Activated CD4-positive, alpha-beta T cell treated with anti-CD3 and anti-CD28 coated beads for 36 hours (primary cell): ENCODE measurements at regions of chr12 and their contacts with region 1.

Region 1: DNA sequence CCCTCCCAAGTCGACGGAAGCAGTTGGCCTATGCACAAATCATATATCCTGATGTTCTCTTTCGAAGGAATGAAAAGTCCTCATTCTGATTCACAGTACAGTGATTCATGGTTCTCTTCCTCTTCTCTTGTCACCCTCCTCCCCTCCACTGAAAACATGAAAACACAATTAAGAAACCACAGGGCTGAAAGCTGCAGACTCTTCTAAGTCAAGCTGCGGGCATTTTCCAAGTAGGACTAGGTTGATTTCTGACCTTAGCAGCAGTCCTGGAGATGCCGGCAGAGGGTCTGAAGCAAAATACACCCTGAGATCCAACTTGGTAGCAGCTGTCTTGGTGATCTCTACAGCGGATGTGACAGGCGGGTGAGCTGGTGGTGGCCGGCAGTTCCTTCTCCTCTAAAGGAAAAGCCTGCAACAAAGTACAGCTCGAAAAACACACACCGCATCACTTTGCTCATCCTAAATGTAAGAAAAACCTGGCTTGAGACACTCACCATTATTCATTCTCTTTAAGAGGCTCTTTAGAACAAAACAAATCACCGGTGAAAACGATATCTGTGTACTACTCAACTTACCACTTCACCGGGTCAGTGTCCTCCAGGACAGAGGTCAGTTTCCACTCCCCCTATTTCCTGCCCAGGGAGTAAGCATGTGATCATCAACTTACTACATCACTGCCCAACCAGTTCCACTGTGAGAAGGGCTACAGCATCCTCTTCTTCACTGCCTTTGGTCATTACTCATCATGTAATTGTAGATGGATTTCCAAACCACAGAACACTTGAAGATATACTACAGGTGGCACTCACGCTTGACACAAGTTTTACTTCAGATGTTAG is 6.0 kb downstream of the TMCC3 start:
- DNase-seq: peak; percentile 41
- ATAC-seq: peak; percentile 61
- H3K4me3 Mint-ChIP-seq: no peak overlapping the region
- H3K27ac Mint-ChIP-seq: no peak overlapping the region
- H3K4me1 Mint-ChIP-seq: peaks cover 37% of the 10 kb centered on the region
- H3K27me3 Mint-ChIP-seq: peaks cover 48% of the 10 kb centered on the region

Region 2: GRCh38 chr12:94305130-94305957 is 339.0 kb before region 1 on chr12:
- CTCF ChIA-PET with region 1: no interaction called
- POLR2A ChIA-PET with region 1: no interaction called
- intact Hi-C with region 1: loop called in 1 of 2 experiments (anchors 1 kb)
- DNase-seq: peak; percentile 68
- ATAC-seq: peak; percentile 93
- H3K4me3 Mint-ChIP-seq: peak overlapping the region; percentile 5
- H3K27ac Mint-ChIP-seq: peak overlapping the region; percentile 70
- H3K4me1 Mint-ChIP-seq: peaks cover 30% of the 10 kb centered on the region
- H3K27me3 Mint-ChIP-seq: no peaks in the 10 kb centered on the region

Region 3: GRCh38 chr12:94603434-94604365 is 40.7 kb before region 1 on chr12:
- CTCF ChIA-PET with region 1: interaction called, 4 read pairs
- POLR2A ChIA-PET with region 1: no interaction called
- intact Hi-C with region 1: loop called in 1 of 2 experiments (anchors 5 kb)
- DNase-seq: peak; percentile 76
- ATAC-seq: peak; percentile 55
- H3K4me3 Mint-ChIP-seq: no peak overlapping the region
- H3K27ac Mint-ChIP-seq: no peak overlapping the region
- H3K4me1 Mint-ChIP-seq: no peaks in the 10 kb centered on the region
- H3K27me3 Mint-ChIP-seq: peaks cover 16% of the 10 kb centered on the region

Region 4: DNA sequence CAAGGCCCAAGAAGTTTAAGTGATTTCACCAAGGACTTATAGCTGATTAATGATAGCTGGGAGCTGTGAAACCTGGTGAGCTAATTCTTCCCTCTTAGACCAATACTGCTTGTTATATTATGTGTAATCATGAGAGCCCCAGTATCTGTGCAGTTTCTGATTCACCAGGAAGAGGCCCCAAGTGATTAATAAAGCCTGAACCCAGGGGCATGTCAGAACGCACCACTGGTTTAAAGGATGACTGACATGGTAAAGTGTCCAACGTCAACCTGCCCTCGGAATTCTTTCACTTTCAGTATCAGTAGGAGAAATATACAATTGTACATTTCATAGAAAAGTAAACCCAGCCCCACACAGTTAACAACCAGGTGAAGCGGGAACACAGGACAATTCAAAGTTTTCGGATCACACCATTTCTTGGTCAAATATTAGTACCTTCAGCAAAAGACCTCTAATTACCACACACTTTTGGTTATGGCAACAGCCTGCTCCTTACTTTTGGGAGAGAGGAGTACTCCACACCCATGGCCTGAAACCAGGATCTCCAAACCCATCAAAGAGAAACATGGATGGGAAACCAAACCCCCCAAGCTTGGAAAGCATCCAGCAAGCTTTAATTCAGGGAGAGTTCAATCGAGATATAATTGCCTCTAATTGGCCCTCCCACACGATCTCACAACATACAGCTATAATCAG is 22.5 kb before region 1 on chr12:
- CTCF ChIA-PET with region 1: interaction called, 3 read pairs
- POLR2A ChIA-PET with region 1: no interaction called
- intact Hi-C with region 1: loop called (anchors 1 kb)
- DNase-seq: peak; percentile 66
- ATAC-seq: peak; percentile 95
- H3K4me3 Mint-ChIP-seq: peak overlapping the region; percentile 25
- H3K27ac Mint-ChIP-seq: peak overlapping the region; percentile 67
- H3K4me1 Mint-ChIP-seq: peaks cover 22% of the 10 kb centered on the region
- H3K27me3 Mint-ChIP-seq: no peaks in the 10 kb centered on the region

Region 5: DNA sequence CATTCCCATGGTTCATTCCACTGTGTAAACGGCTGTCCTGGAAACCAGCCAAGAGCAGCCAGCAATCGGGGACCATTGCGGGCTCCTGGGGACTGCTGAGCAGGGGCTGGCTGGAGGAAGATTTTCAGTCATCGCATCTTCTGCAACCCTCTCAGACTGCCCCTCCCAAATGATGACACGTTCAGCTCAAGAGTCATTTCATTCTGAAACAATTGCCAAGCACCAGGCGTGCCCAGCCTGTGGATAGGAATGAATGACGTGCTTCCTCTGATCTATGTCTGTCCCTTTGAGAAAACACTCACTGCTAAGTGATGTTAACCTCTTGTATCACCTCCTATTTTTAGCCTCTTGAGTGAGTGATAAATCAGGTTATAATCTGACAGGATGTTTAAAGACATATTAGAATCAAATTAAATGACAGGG is 297.1 kb after region 1 on chr12:
- CTCF ChIA-PET with region 1: no interaction called
- POLR2A ChIA-PET with region 1: no interaction called
- intact Hi-C with region 1: loop called in 1 of 2 experiments (anchors 5 kb)
- DNase-seq: peak; percentile 79
- ATAC-seq: peak; percentile 96
- H3K4me3 Mint-ChIP-seq: peak overlapping the region; percentile 15
- H3K27ac Mint-ChIP-seq: peak overlapping the region; percentile 87
- H3K4me1 Mint-ChIP-seq: peaks cover 35% of the 10 kb centered on the region
- H3K27me3 Mint-ChIP-seq: peaks cover 7% of the 10 kb centered on the region